ENCODE measurements at regions of chr15 and their contacts with region 1.

Region 1: GRCh38 chr15:92808978-92809879 is 90.9 kb upstream of the CHD2 start:
- DNase-seq: peak; percentile 99
- H3K4me3 Mint-ChIP-seq: peak overlapping the region; percentile 68
- H3K27ac Mint-ChIP-seq: peak overlapping the region; percentile 90
- H3K4me1 Mint-ChIP-seq: peaks cover 30% of the 10 kb centered on the region
- H3K27me3 Mint-ChIP-seq: no peaks in the 10 kb centered on the region
- CTCF ChIP-seq: peak; percentile 97

Region 2: DNA sequence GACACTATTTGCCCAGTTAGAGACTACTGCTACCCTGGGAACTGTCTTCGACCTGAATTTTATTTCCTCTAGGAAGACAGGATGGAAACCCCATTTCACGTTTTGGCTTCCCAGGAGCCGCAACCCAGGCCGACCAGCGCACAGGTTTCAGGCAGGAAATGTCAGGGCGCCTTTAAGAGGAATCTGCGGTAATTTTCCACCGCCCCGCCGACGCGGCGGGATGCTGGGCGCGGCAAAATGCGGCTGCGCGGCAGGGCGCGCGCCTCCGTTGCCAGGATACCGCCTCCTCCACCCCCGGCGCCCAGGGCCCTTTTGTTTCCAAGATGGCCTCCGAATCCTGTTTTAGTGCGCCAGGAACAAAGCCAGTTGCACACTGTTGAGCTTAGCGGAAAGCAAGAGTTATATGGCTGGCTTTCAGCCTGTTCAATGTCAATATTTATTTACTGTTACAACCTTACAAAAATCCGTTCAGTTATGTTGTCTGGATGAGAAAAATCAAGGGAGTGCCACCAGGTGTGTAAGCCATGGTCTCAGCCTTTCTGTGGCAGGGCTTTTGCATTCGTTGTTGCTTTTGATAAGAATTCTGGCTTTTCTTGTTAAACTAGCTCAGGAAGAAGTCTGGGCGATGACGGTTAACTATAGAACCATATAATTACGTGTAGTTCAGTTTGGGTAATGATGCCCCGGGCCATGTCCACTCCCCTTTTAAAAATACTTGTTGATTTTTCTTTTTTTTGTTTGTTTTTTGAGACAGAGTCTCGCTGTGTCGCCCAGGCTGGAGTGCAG is 11.2 kb after region 1 on chr15:
- CTCF ChIA-PET with region 1: interaction called, 24 read pairs
- intact Hi-C with region 1: no loop called
- DNase-seq: peak; percentile 95
- H3K4me3 Mint-ChIP-seq: peak overlapping the region; percentile 81
- H3K27ac Mint-ChIP-seq: peak overlapping the region; percentile 95
- H3K4me1 Mint-ChIP-seq: peaks cover 52% of the 10 kb centered on the region
- H3K27me3 Mint-ChIP-seq: no peaks in the 10 kb centered on the region
- CTCF ChIP-seq: no peak

Region 3: DNA sequence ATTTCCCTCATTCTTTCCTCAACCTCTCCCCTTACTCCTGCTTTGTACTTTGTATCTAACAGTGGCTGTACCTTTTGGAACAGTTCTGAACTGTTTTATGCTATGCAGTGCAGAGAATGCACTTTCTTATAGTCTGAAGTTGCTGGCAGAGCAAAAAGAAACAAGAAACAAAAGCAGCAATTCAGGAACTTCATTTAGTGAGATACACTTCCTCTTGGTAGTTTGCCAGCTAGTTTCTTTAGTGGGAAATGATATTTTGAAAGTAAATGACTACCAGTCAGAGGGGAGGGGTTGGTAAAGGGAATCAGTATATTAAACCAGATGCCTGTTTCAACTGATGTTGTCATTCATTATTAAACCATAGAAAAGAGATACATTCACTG is 35.9 kb after region 1 on chr15:
- CTCF ChIA-PET with region 1: no interaction called
- intact Hi-C with region 1: loop called (anchors 1 kb)
- DNase-seq: peak; percentile 36
- H3K4me3 Mint-ChIP-seq: peak overlapping the region; percentile 36
- H3K27ac Mint-ChIP-seq: peak overlapping the region; percentile 87
- H3K4me1 Mint-ChIP-seq: peaks cover 16% of the 10 kb centered on the region
- H3K27me3 Mint-ChIP-seq: no peaks in the 10 kb centered on the region
- CTCF ChIP-seq: no peak

Region 4: DNA sequence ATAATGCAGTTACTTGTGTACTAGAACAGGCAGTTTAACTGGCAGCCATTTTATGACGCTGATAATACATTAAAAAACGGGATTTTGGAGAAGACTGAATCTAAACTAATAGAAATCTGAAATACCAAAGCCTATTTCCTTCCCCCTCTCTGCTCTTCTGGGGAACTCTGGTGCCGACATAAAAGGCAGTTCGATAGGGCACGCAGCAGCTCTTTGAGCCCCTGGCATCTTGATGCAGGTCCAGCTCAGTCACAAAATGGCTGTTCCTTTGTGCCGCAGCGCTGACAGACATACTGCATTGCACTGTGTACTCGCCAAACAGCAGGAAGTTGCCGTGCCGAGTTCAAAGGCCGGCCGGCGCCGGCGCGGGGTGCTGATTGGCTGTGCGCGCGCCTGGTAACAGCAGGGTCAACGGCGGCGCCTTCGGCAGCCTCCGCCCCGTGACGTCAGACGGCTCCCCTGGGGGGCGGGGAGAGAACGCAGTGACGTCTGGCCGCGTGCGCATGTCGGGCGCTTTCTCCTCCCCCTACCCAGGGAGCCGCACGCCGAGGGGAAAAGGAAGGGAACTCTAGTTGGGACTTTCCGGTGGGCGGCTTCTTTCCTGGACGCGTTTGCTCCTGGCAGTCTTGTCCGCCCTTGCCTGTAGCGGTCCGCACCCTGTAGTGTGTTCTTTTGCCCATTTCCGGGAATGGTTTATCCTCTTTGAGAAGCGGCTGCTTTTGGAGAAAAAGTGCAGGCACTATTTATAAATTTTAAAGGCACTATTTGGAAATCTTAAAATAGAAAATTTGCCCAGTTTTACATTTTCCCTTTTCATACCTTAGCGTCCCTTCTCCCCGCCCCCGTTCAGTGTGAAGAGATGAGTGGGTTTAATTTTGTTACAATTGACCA is 95.0 kb after region 1 on chr15:
- CTCF ChIA-PET with region 1: interaction called, 24 read pairs
- intact Hi-C with region 1: loop called (anchors 1 kb)
- DNase-seq: peak; percentile 100
- H3K4me3 Mint-ChIP-seq: peak overlapping the region; percentile 80
- H3K27ac Mint-ChIP-seq: peak overlapping the region; percentile 100
- H3K4me1 Mint-ChIP-seq: peaks cover 49% of the 10 kb centered on the region
- H3K27me3 Mint-ChIP-seq: no peaks in the 10 kb centered on the region
- CTCF ChIP-seq: no peak

Measured in Calu3 (cell line).